Activated naive CD4-positive, alpha-beta T cell treated with anti-CD3 and anti-CD28 coated beads for 36 hours (primary cell): ENCODE measurements at regions of chr1 and their contacts with region 1.

Region 1: DNA sequence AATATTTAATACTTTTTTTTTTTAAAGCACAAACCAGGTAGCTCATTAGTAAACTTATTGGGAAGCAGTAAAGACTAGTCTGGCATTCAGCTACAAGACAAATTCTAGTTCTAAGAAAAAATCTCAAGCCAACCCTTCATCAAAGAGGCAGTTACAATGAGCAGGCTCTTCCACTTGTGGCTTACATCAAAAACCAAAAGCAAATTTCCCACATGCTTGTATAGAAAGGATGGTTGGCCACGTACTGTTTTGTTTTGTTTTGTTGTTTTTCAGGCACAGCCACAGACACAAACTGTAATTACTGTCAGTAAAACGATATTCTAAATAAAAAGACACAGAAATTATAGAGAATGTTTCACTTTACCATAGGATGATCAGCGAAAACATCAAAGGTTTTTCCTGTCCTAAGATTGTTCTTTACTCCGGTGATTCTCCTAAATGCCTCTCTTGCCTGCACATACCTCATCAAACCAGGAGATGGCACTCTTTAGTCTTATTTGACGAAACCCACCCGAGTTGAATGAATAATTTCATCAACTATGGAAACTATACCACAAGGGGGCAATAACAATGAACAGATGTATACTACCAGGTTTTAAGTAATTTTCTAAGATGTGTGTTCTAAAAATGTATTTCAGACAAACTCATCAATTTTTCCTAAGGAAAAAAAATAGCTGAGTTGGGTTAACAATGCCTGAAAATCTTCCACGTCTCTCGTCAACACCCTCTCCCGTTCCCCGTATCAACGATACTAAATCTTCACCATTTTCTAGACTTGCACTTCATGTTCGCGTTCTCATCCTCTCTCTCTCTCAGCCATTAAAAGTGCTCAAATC is 26.9 kb downstream of the RPL5 start:
- DNase-seq: peak; percentile 74
- H3K4me3 Mint-ChIP-seq: peak overlapping the region; percentile 63
- H3K27ac Mint-ChIP-seq: peak overlapping the region; percentile 60
- H3K4me1 Mint-ChIP-seq: peaks cover 19% of the 10 kb centered on the region
- H3K27me3 Mint-ChIP-seq: no peaks in the 10 kb centered on the region

Region 2: GRCh38 chr1:92831762-92832536 is 26.8 kb before region 1 on chr1 and contains the start of gene RPL5:
- CTCF ChIA-PET with region 1: interaction called, 4 read pairs
- intact Hi-C with region 1: loop called (anchors 1 kb)
- DNase-seq: peak; percentile 98
- H3K4me3 Mint-ChIP-seq: peak within 1 kb of the TSS; percentile 98
- H3K27ac Mint-ChIP-seq: peak within 1 kb of the TSS; percentile 99
- H3K4me1 Mint-ChIP-seq: peaks cover 38% of the 10 kb centered on the region
- H3K27me3 Mint-ChIP-seq: no peaks in the 10 kb centered on the region
- total RNA-seq, gene RPL5: 1,793 to 1,819 TPM

Region 3: DNA sequence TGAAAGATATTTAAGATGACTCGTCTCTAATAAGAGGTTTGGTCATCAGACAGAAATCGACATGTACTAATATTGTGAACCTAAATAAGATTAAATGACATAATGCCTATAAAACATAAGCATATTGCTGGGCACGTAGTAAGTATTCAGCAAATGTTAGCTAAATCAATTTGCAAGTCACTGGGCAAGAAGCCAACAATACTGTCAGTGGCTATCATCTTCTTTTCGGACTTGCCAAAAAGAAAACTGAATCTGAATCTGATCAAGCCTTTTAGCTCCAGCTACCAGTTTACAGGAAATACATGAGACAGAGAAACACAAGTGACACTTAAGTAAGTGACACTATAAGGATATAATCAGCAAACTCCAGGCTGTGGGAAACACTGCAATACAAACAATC is 19.0 kb after region 1 on chr1:
- CTCF ChIA-PET with region 1: interaction called, 28 read pairs
- intact Hi-C with region 1: no loop called
- DNase-seq: peak; percentile 14
- H3K4me3 Mint-ChIP-seq: peak overlapping the region; percentile 58
- H3K27ac Mint-ChIP-seq: peak overlapping the region; percentile 72
- H3K4me1 Mint-ChIP-seq: peaks cover 27% of the 10 kb centered on the region
- H3K27me3 Mint-ChIP-seq: no peaks in the 10 kb centered on the region

Region 4: DNA sequence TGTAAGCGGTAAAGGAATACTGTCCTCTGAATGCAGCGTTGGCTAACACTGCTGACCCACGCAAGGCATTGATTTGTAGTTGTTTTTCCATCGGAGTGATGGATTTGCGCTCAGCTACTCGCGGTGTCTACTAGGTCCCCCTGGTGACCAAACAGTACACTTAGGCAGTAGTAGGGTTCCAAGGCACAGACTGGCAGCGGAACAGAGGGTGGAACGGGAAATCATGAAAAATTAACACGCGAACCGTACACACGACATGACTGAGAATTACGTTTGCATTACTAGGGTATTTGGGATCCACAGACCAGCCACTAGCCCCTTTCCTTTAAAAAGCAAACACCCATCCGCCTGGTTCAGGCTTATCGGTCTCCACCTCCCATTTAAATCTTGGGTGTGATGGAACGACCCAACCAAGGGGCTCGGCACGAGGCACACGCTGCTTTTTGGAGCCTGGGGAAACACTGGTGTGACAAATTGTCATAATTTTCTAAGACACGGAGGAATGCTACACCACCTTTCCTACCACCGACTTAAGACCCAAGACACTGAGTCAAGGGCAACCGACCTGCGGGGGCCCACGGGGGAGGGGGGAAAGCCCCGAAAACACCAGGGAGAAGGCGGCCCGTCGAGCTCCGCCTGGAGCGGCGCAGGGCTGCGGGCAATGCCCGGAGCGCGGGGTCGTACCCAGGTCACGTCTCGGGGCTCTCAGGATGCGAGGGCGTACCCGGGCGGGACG is 101.8 kb after region 1 on chr1:
- CTCF ChIA-PET with region 1: interaction called, 124 read pairs
- intact Hi-C with region 1: loop called (anchors 1 kb)
- DNase-seq: peak; percentile 76
- H3K4me3 Mint-ChIP-seq: peak overlapping the region; percentile 89
- H3K27ac Mint-ChIP-seq: peak overlapping the region; percentile 94
- H3K4me1 Mint-ChIP-seq: peaks cover 41% of the 10 kb centered on the region
- H3K27me3 Mint-ChIP-seq: no peaks in the 10 kb centered on the region

Region 5: GRCh38 chr1:92987462-92987861 is 128.7 kb after region 1 on chr1:
- CTCF ChIA-PET with region 1: interaction called, 136 read pairs
- intact Hi-C with region 1: no loop called
- DNase-seq: no peak
- H3K4me3 Mint-ChIP-seq: no peak overlapping the region
- H3K27ac Mint-ChIP-seq: no peak overlapping the region
- H3K4me1 Mint-ChIP-seq: peaks cover 45% of the 10 kb centered on the region
- H3K27me3 Mint-ChIP-seq: no peaks in the 10 kb centered on the region

Region 6: GRCh38 chr1:93061895-93062792 is 203.4 kb after region 1 on chr1:
- CTCF ChIA-PET with region 1: interaction called, 13 read pairs
- intact Hi-C with region 1: loop called (anchors 1 kb)
- DNase-seq: peak; percentile 67
- H3K4me3 Mint-ChIP-seq: no peak overlapping the region
- H3K27ac Mint-ChIP-seq: no peak overlapping the region
- H3K4me1 Mint-ChIP-seq: no peaks in the 10 kb centered on the region
- H3K27me3 Mint-ChIP-seq: no peaks in the 10 kb centered on the region